ENCODE measurements at regions of chr4 and their contacts with region 1.

Region 1: GRCh38 chr4:87235020-87235671 is 14.7 kb upstream of the KLHL8 start:
- DNase-seq: no peak
- H3K4me3 ChIP-seq: peak overlapping the region in 2 of 3 donors; percentile 74 to 82
- H3K27ac ChIP-seq: no peak overlapping the region
- H3K4me1 ChIP-seq: peaks cover 0 to 5% (median 3%) of the 10 kb centered on the region in 3 donors
- H3K27me3 ChIP-seq: no peaks in the 10 kb centered on the region
- CTCF ChIP-seq: no peak

Region 2: DNA sequence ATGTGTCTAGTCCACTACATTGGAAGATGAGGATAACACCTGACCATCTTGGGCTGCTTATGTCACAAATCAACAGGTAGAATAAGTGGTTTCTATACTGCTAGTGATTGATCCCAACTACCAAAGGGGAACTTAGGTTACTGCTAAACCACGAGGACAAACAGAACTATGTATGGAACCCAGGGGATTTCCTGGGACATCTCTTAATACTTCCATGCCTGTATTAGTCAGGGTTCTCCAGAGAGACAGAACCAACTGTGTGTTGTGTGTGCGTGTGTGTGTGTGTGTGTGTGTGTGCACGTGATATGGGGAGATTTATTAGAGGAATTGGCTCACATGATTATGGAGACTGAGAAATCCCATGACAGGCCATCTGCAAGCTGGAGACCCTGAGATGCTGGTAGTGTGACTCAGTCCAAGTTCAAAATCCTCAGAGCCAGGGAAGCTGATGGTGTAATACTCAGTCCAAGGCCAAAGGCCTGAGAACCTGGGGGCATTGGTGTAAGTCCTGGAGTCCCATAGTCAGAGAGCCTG is 316.5 kb before region 1 on chr4:
- intact Hi-C with region 1: loop called (anchors 10 kb)
- DNase-seq: no peak
- H3K4me3 ChIP-seq: no peak overlapping the region
- H3K27ac ChIP-seq: no peak overlapping the region
- H3K4me1 ChIP-seq: no peaks in the 10 kb centered on the region
- H3K27me3 ChIP-seq: no peaks in the 10 kb centered on the region
- CTCF ChIP-seq: no peak

Region 3: DNA sequence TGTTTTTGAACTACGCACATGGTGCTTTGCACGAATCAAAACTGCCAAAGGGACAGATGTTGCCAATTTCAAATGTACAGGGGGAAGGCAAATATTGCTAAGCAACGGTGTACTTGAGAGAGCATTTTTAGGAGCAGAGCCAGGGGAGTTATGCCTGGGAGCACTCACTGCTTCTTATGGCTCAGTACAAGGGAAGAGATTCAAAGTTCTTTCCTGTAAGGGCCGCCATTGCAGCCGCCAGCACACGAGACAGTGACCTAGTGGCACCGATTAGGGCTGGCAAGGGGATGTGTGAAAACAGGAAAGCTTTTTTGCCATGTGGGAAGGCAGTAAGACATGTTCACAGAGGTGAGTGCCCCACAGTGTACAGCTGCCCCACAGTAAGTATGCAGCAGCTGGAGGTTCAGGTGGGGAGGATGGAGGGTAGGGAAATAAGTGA is 166.5 kb before region 1 on chr4:
- intact Hi-C with region 1: no loop called
- DNase-seq: peak in 1 of 5 donors; percentile 44
- H3K4me3 ChIP-seq: no peak overlapping the region
- H3K27ac ChIP-seq: peak overlapping the region; percentile 15 to 48
- H3K4me1 ChIP-seq: peaks cover 2 to 31% (median 25%) of the 10 kb centered on the region in 3 donors
- H3K27me3 ChIP-seq: no peaks in the 10 kb centered on the region
- CTCF ChIP-seq: no peak

Region 4: DNA sequence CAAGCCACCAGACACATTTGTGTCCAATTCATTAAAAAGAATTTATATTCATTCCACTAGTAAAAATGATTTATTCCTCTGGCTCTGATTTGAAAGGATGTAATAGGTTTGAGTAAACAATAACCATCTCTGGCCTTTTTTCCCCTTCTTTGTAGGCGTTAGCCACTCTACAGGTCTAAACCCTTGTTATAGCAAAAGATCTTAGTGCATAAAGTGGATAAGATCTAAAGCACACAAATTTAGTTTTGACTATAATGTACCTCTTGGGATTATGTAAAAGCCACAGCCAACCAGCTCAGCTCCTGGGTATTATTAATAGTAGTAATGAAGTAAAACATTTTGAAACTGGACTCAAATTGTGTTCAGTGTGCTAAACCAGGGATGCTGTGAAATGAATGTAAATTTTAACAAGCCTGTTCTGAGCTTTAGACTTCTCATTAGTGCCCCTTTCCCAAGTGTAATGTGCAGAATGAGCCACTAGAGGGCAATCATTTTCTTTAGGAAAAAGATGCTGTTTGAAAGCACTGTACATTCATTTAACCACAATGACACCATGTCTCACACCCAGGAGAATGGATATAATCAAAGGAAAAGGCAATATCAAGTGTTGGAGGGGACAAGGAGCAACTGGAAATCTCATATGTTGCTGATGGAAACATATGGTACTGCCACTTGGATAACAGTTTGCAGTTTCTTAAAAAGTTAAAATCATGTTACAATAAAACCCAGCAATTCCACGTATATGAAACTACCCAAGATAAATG is 84.5 kb before region 1 on chr4:
- intact Hi-C with region 1: loop called (anchors 10 kb)
- DNase-seq: peak in 3 of 5 donors; percentile 58 to 90 (median 89)
- H3K4me3 ChIP-seq: no peak overlapping the region
- H3K27ac ChIP-seq: no peak overlapping the region
- H3K4me1 ChIP-seq: no peaks in the 10 kb centered on the region
- H3K27me3 ChIP-seq: no peaks in the 10 kb centered on the region
- CTCF ChIP-seq: peak; percentile 85

Region 5: DNA sequence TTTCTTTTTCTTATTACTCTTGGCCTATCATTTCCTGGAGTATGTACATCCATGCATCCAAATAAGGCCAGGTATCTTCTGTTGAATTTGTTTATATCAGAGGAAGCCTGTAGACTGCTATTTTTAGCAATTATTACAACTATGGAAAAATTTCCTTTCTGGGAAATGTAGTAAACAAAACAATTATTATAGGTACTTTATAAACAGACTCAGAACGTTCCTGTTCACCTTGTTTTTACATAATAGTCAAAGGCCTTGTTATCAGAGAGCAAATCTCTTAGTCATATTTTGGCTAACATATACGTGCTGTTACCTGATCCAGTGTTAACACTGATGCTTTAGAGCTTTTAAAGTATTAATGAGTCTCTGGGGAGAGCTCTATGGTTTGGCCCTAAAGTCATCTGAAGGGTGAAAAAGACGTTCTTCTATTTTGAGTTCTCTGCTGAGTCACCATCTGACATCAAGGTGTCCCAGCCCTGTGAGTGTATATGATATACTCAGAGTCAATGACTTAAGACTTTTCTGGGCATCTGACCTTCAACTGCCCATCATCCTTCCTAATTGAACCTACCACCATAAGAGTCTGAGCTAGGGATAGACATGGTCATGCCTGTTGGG is 286.7 kb after region 1 on chr4:
- intact Hi-C with region 1: no loop called
- DNase-seq: no peak
- H3K4me3 ChIP-seq: no peak overlapping the region
- H3K27ac ChIP-seq: peak overlapping the region; percentile 79 to 93
- H3K4me1 ChIP-seq: peaks cover 3 to 25% (median 16%) of the 10 kb centered on the region in 3 donors
- H3K27me3 ChIP-seq: no peaks in the 10 kb centered on the region
- CTCF ChIP-seq: no peak